A673 (cell line): ENCODE measurements at regions of chr7 and their contacts with region 1.

Region 1: DNA sequence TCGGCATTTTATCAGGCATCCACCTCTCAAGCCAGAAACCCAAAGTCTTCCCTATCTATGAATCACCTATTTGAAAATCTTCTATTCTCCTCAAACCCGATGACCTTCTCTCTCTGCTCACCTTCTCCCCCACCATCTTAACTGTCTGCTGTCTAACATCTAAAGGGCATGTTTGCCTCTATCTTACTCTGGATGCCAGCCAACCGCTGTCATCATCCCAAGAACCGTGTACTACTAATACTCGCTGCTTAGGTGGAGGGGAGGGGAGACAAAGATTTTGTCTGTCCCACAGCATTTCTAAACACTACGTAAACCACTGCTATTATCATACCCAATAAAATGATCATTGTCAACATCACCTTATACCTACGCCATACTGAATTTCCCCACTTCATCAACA is 29.5 kb downstream of the PAXIP1 start:
- DNase-seq: no peak
- H3K4me3 ChIP-seq: no peak overlapping the region
- H3K27ac ChIP-seq: no peak overlapping the region
- H3K4me1 ChIP-seq: no peaks in the 10 kb centered on the region
- H3K27me3 ChIP-seq: no peaks in the 10 kb centered on the region
- CTCF ChIP-seq: no peak

Region 2: DNA sequence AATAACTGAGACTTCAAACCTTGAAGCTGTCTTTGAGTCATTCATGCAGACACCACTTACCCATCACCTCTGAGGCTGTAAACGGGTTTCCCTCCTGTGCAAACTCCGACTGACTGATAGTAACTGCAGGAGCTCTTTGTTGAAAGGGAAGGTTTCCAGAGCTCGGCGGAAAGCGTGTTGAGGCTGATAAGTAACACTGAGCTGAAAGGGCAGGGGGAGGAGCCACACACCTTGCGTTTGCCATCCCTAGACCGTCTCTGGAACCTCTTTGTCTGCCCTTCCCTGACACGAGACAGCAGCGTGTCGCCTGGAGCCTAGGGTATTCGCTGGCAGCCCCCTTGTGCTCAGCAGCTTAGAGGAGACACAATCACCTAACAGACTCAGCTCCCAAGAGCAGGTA is 104.5 kb before region 1 on chr7:
- CTCF ChIA-PET with region 1: no interaction called
- POLR2A ChIA-PET with region 1: no interaction called
- intact Hi-C with region 1: no loop called
- DNase-seq: no peak
- H3K4me3 ChIP-seq: no peak overlapping the region
- H3K27ac ChIP-seq: no peak overlapping the region
- H3K4me1 ChIP-seq: no peaks in the 10 kb centered on the region
- H3K27me3 ChIP-seq: peaks cover 71% of the 10 kb centered on the region
- CTCF ChIP-seq: no peak

Region 3: GRCh38 chr7:154953006-154953684 is 20.2 kb before region 1 on chr7:
- CTCF ChIA-PET with region 1: interaction called, 12 read pairs
- POLR2A ChIA-PET with region 1: no interaction called
- intact Hi-C with region 1: no loop called
- DNase-seq: peak; percentile 60
- H3K4me3 ChIP-seq: no peak overlapping the region
- H3K27ac ChIP-seq: no peak overlapping the region
- H3K4me1 ChIP-seq: no peaks in the 10 kb centered on the region
- H3K27me3 ChIP-seq: no peaks in the 10 kb centered on the region
- CTCF ChIP-seq: peak; percentile 82